ENCODE measurements at regions of chr9 and their contacts with region 1.

Region 1: DNA sequence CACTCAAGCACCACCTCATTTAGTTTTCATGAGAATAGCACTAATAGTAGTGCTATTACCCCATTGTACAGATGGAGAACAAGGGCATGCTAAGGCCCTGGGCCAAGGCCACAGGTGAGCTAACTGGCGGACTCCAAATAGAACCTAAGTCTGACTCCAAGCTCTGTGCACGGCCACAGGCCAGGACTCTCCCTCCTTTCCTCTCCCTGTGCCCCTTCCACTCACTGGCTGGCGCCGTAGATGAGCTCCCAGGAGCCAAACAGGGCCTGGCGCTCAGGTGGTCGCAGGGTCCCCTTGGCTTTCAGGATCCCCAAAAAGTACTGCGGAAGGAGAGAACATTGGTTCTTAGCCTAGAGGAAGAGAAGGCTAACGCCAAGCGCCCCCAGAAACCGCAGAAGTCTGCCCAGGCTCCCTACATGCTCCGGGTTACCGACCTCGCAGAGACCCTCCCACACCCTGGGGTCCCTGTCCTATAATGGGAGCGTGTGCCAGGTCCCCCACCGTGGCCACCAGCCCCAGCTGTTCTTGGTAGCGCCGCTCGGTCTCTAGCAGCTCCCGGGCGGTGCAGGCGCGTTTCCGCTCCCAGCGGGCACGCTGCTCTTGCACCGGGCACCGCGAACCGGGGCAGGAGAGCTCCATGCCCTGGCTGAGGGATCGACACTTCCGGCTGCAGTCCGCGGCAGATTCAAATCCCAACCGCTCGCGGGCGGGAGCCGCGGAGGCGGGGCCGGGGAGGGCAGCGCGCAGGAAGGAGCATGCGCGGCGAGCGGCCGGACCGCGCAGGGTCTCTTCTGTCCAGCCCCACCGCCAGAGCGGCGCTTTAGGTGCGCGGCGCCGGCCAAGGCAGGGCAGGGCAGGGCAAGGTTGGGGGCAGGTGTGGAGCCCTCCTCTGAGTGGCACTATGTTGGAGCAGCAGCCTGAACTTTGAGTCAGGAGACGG is at the start of gene ARHGEF39:
- DNase-seq: peak; percentile 93
- CTCF ChIP-seq: peak; percentile 61

Region 2: GRCh38 chr9:35603987-35604577 is 60.7 kb before region 1 on chr9:
- CTCF ChIA-PET with region 1: interaction called, 11 read pairs
- POLR2A ChIA-PET with region 1: no interaction called
- DNase-seq: peak; percentile 98
- CTCF ChIP-seq: peak; percentile 97

Region 3: GRCh38 chr9:35675732-35676392 is 11.1 kb after region 1 on chr9:
- CTCF ChIA-PET with region 1: interaction called, 20 read pairs
- POLR2A ChIA-PET with region 1: no interaction called
- DNase-seq: peak; percentile 70
- CTCF ChIP-seq: no peak

Region 4: DNA sequence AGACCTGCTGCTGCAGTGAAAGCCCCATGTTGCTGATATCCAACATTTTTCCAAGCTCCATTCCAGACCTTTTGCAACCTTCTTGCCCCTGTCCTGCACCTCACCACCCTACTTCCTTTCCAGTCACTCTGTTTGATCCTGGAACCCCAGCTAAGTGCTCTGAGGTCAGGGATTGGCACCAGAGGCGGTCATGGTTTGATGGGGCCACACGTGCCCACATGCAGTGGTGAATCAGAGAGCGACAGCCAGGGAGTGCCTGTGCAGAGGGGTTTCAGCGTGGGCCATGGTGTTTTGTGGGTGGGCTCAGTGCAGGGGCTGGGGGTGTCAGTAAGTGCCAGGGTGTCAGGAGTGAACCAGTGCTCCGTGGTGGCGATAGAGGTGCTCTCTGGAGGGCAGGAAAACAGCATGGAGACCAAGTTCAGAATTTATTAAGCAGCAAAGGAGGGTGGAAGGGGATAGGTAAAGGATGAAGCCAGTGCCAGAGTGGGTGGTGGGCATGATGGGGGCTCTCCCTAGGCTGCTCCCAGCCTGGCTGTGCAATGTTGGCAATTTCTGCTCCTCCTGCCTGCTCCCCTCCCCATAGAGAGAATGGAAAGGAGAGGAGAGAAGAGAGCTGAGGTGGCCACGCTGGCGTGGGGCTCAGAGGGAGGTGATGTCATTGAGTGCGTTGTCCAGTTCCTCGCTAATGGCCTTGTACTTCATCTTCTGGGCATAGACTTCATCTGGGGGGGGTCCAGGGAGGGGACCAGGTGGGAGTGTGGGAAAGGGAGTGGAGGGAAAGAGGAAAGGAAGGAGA is 17.9 kb after region 1 on chr9:
- CTCF ChIA-PET with region 1: interaction called, 11 read pairs
- POLR2A ChIA-PET with region 1: no interaction called
- DNase-seq: no peak
- CTCF ChIP-seq: no peak

Measured in GM10248 (cell line).